Stomach (tissue), 19 donors: ENCODE measurements at regions of chr2 and their contacts with region 1.

Region 1: DNA sequence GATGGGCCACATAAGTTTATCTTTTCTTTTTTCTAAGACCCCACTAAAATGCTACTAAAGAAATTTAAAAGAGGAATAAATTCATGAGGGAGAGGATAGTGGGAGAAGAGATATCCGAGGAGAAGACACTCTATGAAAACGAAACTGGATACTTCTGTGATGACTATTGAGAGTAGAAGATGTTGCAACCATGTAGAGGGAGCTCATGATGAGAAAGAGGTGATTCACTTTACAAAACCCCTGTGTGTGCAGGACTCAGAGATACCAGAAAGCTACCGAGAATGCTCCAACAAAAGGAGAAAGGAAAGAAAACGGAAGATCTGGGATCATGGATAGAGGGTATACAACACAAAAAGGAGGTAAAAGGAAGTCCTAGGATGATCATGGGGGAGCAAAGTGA is 34.9 kb downstream of the SLC38A11 start:
- DNase-seq: no peak
- H3K4me3 ChIP-seq: no peak overlapping the region
- H3K27ac ChIP-seq: no peak overlapping the region
- H3K4me1 ChIP-seq: peaks cover 0 to 13% (median 0%) of the 10 kb centered on the region in 4 donors
- H3K27me3 ChIP-seq: no peaks in the 10 kb centered on the region
- CTCF ChIP-seq: no peak
- EP300 ChIP-seq: no peak
- POLR2A ChIP-seq: no peak

Region 2: DNA sequence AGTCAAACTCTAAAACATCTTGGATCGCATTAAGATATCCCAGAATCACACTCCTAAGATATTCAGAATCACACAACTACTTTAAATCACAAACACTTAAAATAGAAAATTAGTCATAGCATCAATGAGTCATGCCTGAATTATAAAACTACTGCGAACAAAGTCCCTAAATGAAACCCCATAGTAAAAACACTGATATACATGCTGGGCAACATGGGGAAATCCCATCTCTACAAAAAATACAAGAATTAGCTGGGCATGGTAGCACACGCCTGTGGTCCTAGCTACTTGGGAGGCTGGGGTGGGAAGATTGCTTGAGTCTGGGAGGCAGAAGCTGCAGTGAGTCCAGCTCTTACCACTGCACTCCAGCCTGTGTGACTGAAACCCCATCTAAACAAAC is 180.5 kb before region 1 on chr2:
- intact Hi-C with region 1: loop called (anchors 10 kb)
- DNase-seq: no peak
- H3K4me3 ChIP-seq: no peak overlapping the region
- H3K27ac ChIP-seq: peak overlapping the region in 4 of 5 donors; percentile 4 to 68 (median 32)
- H3K4me1 ChIP-seq: peaks cover 4 to 54% (median 19%) of the 10 kb centered on the region in 4 donors
- H3K27me3 ChIP-seq: no peaks in the 10 kb centered on the region
- CTCF ChIP-seq: no peak
- EP300 ChIP-seq: no peak
- POLR2A ChIP-seq: no peak